CD14-positive monocyte (primary cell): ENCODE measurements at regions of chr12 and their contacts with region 1.

Region 1: DNA sequence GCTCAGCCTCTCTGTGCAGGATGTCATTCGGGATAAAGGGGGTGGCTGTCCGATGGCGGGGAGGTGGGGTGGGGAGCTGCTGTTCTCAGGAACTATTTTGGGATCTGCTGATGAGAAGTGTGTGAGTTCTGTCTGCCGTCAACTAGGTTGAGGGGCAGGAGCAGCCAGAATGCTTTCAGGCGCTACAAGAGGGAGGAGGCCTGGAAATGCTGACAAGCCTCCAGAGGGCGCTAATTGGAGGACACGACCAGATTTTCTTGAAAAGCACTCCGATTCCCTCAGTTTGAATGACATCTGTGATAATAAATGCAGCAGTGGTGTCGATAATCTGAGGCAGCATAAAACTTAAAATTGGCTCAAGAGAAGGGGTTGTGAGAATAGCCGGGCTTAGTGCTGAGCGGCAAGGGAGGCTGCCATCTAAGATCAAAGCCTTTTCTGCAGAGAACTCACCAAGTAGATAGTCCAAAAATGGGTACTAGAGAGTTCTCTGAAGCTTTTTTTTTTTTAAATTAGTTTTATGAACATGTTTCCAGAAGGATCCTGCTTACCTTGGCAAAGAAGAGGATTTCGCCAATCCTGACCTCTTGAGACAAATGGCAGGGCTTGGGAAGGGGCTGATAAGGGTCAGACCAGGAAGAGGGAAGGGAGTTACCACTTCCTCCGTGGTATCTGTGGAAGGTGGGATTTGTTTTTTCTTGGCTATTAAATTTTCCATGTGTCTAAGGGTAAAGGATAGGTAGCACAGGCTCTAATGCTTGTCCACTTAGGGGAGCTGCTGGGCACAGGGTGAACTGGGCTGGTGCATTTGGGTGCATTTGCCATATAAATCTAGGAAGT is 94.4 kb downstream of the CRACR2A start:
- DNase-seq: peak; percentile 11 to 18 (median 17)
- H3K4me3 ChIP-seq: no peak overlapping the region
- H3K4me3 Mint-ChIP-seq: no peak overlapping the region
- H3K27ac ChIP-seq: no peak overlapping the region
- H3K27ac Mint-ChIP-seq: peak overlapping the region in 1 of 7 donors; percentile 47
- H3K4me1 ChIP-seq: no peaks in the 10 kb centered on the region
- H3K4me1 Mint-ChIP-seq: no peaks in the 10 kb centered on the region
- H3K27me3 ChIP-seq: no peaks in the 10 kb centered on the region
- H3K27me3 Mint-ChIP-seq: no peaks in the 10 kb centered on the region
- CTCF ChIP-seq: peak; percentile 51

Region 2: GRCh38 chr12:3554371-3555115 is 104.0 kb before region 1 on chr12:
- intact Hi-C with region 1: no loop called
- DNase-seq: no peak
- H3K4me3 ChIP-seq: no peak overlapping the region
- H3K4me3 Mint-ChIP-seq: no peak overlapping the region
- H3K27ac ChIP-seq: no peak overlapping the region
- H3K27ac Mint-ChIP-seq: no peak overlapping the region
- H3K4me1 ChIP-seq: no peaks in the 10 kb centered on the region
- H3K4me1 Mint-ChIP-seq: peaks cover 4% of the 10 kb centered on the region
- H3K27me3 ChIP-seq: no peaks in the 10 kb centered on the region
- H3K27me3 Mint-ChIP-seq: peaks cover 11 to 16% (median 14%) of the 10 kb centered on the region in 3 donors
- CTCF ChIP-seq: no peak

Region 3: GRCh38 chr12:3698218-3698974 is 39.9 kb after region 1 on chr12:
- intact Hi-C with region 1: no loop called
- DNase-seq: peak in 2 of 3 donors; percentile 14 to 16
- H3K4me3 ChIP-seq: no peak overlapping the region
- H3K4me3 Mint-ChIP-seq: no peak overlapping the region
- H3K27ac ChIP-seq: peak overlapping the region in 1 of 2 donors; percentile 42
- H3K27ac Mint-ChIP-seq: peak overlapping the region in 6 of 7 donors; percentile 9 to 80 (median 47)
- H3K4me1 ChIP-seq: no peaks in the 10 kb centered on the region
- H3K4me1 Mint-ChIP-seq: peaks cover 8% of the 10 kb centered on the region
- H3K27me3 ChIP-seq: no peaks in the 10 kb centered on the region
- H3K27me3 Mint-ChIP-seq: peaks cover 0 to 2% (median 0%) of the 10 kb centered on the region in 3 donors
- CTCF ChIP-seq: no peak

Region 4: GRCh38 chr12:3752741-3753486 is 94.4 kb after region 1 on chr12 and contains the start of gene CRACR2A:
- intact Hi-C with region 1: loop called in 1 of 2 experiments (anchors 5 kb)
- DNase-seq: peak; percentile 65 to 72 (median 67)
- H3K4me3 ChIP-seq: peak within 1 kb of the TSS; percentile 77 to 88 (median 87)
- H3K4me3 Mint-ChIP-seq: peak within 1 kb of the TSS; percentile 77 to 93
- H3K27ac ChIP-seq: peak within 1 kb of the TSS; percentile 95
- H3K27ac Mint-ChIP-seq: peak within 1 kb of the TSS; percentile 93 to 98 (median 96)
- H3K4me1 ChIP-seq: peaks cover 35 to 49% of the 10 kb centered on the region in 2 donors
- H3K4me1 Mint-ChIP-seq: peaks cover 53% of the 10 kb centered on the region
- H3K27me3 ChIP-seq: no peaks in the 10 kb centered on the region
- H3K27me3 Mint-ChIP-seq: peaks cover 0 to 6% (median 3%) of the 10 kb centered on the region in 3 donors
- CTCF ChIP-seq: peak; percentile 88
- polyA plus RNA-seq, gene CRACR2A: 2.8 to 10.7 (median 5.8) TPM

Region 5: GRCh38 chr12:3777206-3777809 is 118.8 kb after region 1 on chr12:
- intact Hi-C with region 1: loop called (anchors 10 kb)
- DNase-seq: peak in 2 of 3 donors; percentile 31 to 38
- H3K4me3 ChIP-seq: no peak overlapping the region
- H3K4me3 Mint-ChIP-seq: no peak overlapping the region
- H3K27ac ChIP-seq: no peak overlapping the region
- H3K27ac Mint-ChIP-seq: no peak overlapping the region
- H3K4me1 ChIP-seq: no peaks in the 10 kb centered on the region
- H3K4me1 Mint-ChIP-seq: no peaks in the 10 kb centered on the region
- H3K27me3 ChIP-seq: peaks cover 0 to 4% of the 10 kb centered on the region in 2 donors
- H3K27me3 Mint-ChIP-seq: peaks cover 0 to 4% (median 3%) of the 10 kb centered on the region in 3 donors
- CTCF ChIP-seq: peak; percentile 77